PC-3 (cell line): ENCODE measurements at regions of chr21 and their contacts with region 1.

Region 1: GRCh38 chr21:42818328-42818749 is 61.0 kb downstream of the WDR4 start:
- DNase-seq: peak; percentile 69
- ATAC-seq: peak; percentile 89
- H3K4me3 ChIP-seq: no peak overlapping the region
- H3K27ac ChIP-seq: no peak overlapping the region
- H3K4me1 ChIP-seq: no peaks in the 10 kb centered on the region
- H3K27me3 ChIP-seq: 0 out of 2 replicates have a peak, but pooled peaks cover 5% of the 10 kb centered on the region
- CTCF ChIP-seq: peak; percentile 96

Region 2: DNA sequence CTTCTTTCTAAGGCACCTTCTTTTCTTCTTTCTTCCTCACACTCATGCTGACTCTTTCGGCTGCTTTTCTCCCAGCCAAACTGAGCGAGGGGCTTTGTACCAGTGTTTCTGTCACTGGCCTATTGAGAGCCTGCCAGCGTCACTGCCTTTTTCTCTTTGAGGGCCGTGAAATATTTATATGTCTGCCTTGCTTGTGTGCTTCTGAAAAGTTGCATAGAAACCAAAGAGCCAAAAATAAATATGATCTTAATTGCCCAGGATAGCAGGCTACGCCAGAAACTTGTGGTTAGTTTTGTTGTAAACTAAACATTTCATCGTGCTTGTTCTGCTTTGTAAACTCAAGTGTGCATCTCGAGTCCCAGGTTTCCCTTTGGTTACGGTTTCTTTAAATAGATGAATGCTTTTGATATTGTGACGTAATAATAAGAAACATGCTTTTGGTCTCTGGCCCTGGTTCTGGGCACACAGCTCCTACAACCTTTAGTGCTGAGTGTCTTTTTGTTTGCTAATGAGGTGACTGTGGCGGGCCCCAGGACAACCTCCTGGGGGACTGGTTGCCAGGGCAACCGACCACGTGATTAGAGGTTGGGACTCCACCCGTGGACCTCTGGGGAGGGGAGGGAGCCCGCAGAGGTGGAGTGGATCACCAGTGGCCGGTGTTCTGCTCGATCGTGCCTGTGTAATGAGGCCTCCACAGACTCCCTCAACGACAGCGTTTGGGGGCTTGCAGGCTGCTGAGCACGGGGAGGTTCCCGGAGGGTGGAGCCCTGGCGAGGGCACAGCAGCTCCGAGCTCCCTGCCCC is 293.8 kb before region 1 on chr21:
- CTCF ChIA-PET with region 1: no interaction called
- POLR2A ChIA-PET with region 1: no interaction called
- intact Hi-C with region 1: no loop called
- DNase-seq: peak; percentile 22
- ATAC-seq: peak; percentile 65
- H3K4me3 ChIP-seq: no peak overlapping the region
- H3K27ac ChIP-seq: peak overlapping the region; percentile 55
- H3K4me1 ChIP-seq: peaks cover 20% of the 10 kb centered on the region
- H3K27me3 ChIP-seq: no peaks in the 10 kb centered on the region
- CTCF ChIP-seq: no peak

Region 3: DNA sequence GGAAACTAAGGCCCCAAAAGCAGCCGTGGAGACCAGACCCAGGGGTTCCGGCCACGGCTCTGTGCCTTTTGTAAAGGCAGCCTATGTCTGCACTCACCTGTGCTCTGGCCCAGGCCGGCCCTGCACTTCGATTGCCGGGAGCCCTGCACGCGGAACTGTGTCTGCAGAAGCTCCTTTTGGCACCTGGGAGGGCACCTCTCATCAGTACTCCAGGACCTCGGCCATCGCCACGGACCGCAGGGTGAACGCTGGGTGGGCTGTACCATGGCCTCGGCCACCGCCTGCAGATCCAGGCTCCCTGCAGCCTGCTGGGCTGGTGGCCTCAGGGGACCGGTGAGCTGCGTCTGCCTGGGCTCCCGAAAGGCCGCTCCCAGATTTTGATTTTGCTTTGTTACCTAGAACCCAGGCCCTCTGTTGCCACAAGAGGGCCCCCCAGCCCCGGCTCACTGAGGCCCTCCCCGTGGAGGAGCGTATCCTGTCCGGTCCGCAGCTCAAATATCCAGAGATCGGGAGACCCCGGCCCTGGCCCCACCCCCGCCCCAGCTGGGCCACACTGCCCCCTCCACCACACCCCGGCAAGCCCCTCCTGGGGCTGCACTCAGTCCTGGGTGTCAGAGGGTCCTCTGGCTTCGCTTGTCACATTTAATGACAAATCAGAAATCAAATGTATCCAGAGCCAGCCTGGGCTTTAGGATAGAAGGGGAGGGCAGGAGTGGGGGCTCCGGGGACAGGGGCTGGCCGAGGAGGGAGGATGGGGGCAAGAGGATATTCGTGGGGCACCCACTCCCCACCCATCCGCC is 225.1 kb before region 1 on chr21:
- CTCF ChIA-PET with region 1: interaction called, 3 read pairs
- POLR2A ChIA-PET with region 1: no interaction called
- intact Hi-C with region 1: loop called (anchors 2 kb)
- DNase-seq: peak; percentile 77
- ATAC-seq: peak; percentile 99
- H3K4me3 ChIP-seq: peak overlapping the region; percentile 51; the same call in 1 of the 2 replicates
- H3K27ac ChIP-seq: no peak overlapping the region
- H3K4me1 ChIP-seq: peaks cover 4% of the 10 kb centered on the region; the same call in 1 of the 2 replicates
- H3K27me3 ChIP-seq: peaks cover 11% of the 10 kb centered on the region; the same call in 1 of the 2 replicates
- CTCF ChIP-seq: peak; percentile 79

Region 4: GRCh38 chr21:42652527-42653230 is 165.7 kb before region 1 on chr21:
- CTCF ChIA-PET with region 1: no interaction called
- POLR2A ChIA-PET with region 1: no interaction called
- intact Hi-C with region 1: loop called (anchors 5 kb)
- DNase-seq: peak; percentile 41
- ATAC-seq: peak; percentile 72
- H3K4me3 ChIP-seq: no peak overlapping the region
- H3K27ac ChIP-seq: no peak overlapping the region
- H3K4me1 ChIP-seq: peaks cover 23% of the 10 kb centered on the region
- H3K27me3 ChIP-seq: peaks cover 67% of the 10 kb centered on the region
- CTCF ChIP-seq: peak; percentile 52

Region 5: DNA sequence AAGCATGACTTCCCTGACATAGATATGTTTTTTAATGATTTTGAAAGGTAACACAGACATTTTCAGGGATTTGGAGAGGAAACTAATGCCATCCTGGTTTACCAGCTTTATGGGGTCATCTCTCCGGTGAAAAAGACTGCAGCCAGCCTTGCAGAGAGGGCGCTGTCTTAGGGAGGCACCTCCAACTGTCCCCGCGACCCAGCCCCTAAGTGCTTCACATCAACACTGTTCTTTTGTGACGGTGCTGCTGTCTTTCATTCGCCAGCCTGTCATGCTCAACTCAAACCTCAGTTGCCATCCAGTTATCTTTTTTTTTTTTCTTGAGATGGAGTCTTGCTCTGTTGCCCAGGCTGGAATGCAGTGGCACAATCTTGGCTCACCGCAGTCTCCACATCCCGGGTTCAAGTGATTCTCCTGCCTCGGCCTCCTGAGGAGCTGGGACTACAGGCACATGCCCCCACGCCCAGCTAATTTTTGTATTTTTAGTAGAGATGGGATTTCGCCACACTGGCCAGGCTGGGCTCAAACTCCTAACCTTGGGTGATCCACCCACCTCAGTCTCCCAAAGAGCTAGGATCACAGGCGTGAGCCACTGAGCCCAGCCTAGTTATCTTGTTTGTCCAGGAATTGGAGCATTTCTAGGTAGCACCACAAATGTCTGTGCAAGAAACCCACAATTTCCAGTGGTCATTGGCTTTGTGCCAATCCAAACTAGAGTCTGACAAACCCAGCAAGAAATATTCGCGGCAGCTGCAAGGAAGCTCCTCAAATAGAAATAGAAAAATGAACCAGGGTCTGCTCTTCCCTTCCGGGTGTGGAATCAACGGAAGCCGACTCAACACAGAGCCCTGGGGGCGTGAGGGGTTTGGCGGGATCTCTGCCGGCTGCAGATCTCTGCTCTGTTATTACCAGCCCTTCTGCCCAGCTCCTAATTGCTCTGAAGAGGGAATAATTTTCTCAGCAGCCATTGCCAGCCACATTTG is 140.7 kb before region 1 on chr21:
- CTCF ChIA-PET with region 1: no interaction called
- POLR2A ChIA-PET with region 1: no interaction called
- intact Hi-C with region 1: loop called (anchors 10 kb)
- DNase-seq: peak; percentile 62
- ATAC-seq: no peak
- H3K4me3 ChIP-seq: no peak overlapping the region
- H3K27ac ChIP-seq: no peak overlapping the region
- H3K4me1 ChIP-seq: peaks cover 15% of the 10 kb centered on the region
- H3K27me3 ChIP-seq: peaks cover 66% of the 10 kb centered on the region
- CTCF ChIP-seq: no peak

Region 6: GRCh38 chr21:42705746-42706374 is 112.5 kb before region 1 on chr21:
- CTCF ChIA-PET with region 1: no interaction called
- POLR2A ChIA-PET with region 1: no interaction called
- intact Hi-C with region 1: no loop called
- DNase-seq: no peak
- ATAC-seq: no peak
- H3K4me3 ChIP-seq: no peak overlapping the region
- H3K27ac ChIP-seq: no peak overlapping the region
- H3K4me1 ChIP-seq: no peaks in the 10 kb centered on the region
- H3K27me3 ChIP-seq: peaks cover 24% of the 10 kb centered on the region
- CTCF ChIP-seq: peak; percentile 19; the same call in 1 of the 2 replicates

Region 7: DNA sequence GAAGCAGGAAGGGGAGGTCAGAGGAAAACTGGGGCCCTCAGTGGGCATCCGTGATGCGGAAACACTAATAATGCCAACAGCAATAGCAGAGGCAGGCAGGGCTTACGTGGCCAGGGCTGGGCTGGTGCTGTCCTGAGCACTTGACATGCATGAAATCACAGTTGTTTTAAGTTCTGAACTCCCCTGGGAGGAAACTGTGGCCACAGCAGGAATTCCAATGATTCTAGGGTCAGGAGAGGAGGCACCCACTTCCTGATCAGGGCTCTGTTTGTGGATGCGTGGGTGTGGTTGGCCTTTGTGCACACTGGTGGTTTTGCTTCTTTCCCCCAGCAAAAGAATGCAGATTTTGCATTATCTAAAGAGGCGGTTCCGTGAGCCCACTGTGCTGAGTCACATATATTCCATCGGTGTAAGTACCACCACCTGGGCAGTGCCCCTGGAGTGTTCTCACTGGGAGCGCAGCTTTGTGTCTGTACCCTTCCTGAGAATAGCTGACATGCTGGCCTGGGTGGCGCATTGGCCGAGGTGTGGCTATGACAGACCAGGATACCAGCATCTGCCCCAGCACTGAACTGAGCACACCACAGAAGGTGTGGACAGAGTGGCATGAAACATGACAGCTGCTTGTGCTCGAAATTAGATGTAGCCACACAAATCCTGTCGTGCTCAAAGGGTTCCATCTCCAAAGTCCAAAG is 94.0 kb before region 1 on chr21:
- CTCF ChIA-PET with region 1: no interaction called
- POLR2A ChIA-PET with region 1: no interaction called
- intact Hi-C with region 1: loop called (anchors 10 kb)
- DNase-seq: peak; percentile 96
- ATAC-seq: peak; percentile 89
- H3K4me3 ChIP-seq: no peak overlapping the region
- H3K27ac ChIP-seq: peak overlapping the region; percentile 85
- H3K4me1 ChIP-seq: peaks cover 37% of the 10 kb centered on the region
- H3K27me3 ChIP-seq: no peaks in the 10 kb centered on the region
- CTCF ChIP-seq: no peak